H1 (cell line): ENCODE measurements at regions of chr6 and their contacts with region 1.

Region 1: GRCh38 chr6:158548418-158549161 is 11.3 kb upstream of the TMEM181 start:
- DNase-seq: no peak
- H3K4me3 ChIP-seq: no peak overlapping the region
- H3K27ac ChIP-seq: peak overlapping the region; percentile 47; the same call in 1 of the 2 replicates
- H3K4me1 ChIP-seq: peaks cover 0 to 7% (median 4%) of the 10 kb centered on the region in 4 experiments; a peak in 5 of 7 replicates
- H3K27me3 ChIP-seq: no peaks in the 10 kb centered on the region
- CTCF ChIP-seq: no peak
- EP300 ChIP-seq: no peak
- POLR2A ChIP-seq: no peak
- RAD21 ChIP-seq: no peak

Region 2: DNA sequence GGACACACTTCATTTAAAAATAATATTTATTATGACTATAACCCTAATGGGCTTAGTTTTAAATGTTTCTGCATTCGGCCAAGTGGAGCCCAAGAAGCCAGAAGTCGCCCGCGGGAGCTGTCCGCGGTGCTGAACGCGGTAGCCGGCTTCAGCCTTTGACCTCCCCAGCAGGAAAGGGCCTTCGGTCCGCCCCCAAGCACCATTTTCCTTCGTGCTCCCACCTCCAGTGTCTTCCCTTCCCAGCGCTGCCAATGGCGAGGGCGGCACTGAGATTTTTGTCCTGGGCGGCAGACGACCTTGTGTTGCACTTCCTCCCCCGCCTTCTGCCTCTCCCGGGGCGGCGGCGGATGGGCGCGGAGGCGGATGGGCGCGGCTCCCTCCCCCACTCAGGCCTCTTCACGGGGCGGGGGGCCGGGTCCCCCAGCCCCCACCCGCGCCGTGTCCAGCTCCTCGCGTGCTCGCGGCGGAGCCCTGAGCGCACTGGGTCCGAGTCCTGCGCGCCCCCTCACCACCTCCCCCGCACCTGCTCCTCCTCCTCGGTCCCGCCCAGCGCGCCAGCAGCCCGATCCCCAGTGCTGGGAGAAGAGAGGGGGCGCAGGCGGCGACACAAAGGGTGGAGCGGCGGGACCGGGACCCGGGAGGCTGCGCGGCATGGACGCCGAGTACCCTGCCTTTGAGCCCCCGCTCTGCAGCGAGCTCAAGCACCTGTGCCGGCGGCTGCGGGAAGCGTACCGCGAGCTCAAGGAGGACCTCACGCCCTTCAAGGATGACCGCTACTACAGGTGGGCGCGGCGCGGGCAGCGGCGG is 12.3 kb before region 1 on chr6:
- CTCF ChIA-PET with region 1: interaction called, 16 read pairs
- POLR2A ChIA-PET with region 1: interaction called, 11 read pairs
- DNase-seq: peak in 1 of 2 experiments; percentile 92
- H3K4me3 ChIP-seq: peak overlapping the region; percentile 77 to 96 (median 80)
- H3K27ac ChIP-seq: peak overlapping the region; percentile 20; the same call in 1 of the 2 replicates
- H3K4me1 ChIP-seq: peaks cover 2 to 3% (median 2%) of the 10 kb centered on the region in 4 experiments; a peak in 2 of 7 replicates
- H3K27me3 ChIP-seq: peaks cover 0 to 3% (median 1%) of the 10 kb centered on the region in 4 experiments; a peak in 3 of 7 replicates
- CTCF ChIP-seq: no peak
- EP300 ChIP-seq: no peak
- POLR2A ChIP-seq: no peak; a peak in 1 of 3 replicates
- RAD21 ChIP-seq: no peak; a peak in 1 of 4 replicates

Region 3: GRCh38 chr6:158559895-158560835 is 11.6 kb after region 1 on chr6 and contains the start of gene TMEM181:
- CTCF ChIA-PET with region 1: interaction called, 6 read pairs
- POLR2A ChIA-PET with region 1: interaction called, 11 read pairs
- DNase-seq: peak in 1 of 2 experiments; percentile 88
- H3K4me3 ChIP-seq: peak within 1 kb of the TSS; percentile 58 to 95 (median 66)
- H3K27ac ChIP-seq: peak within 1 kb of the TSS; percentile 70; the same call in 1 of the 2 replicates
- H3K4me1 ChIP-seq: peaks cover 5 to 9% (median 8%) of the 10 kb centered on the region in 4 experiments; a peak in 6 of 7 replicates
- H3K27me3 ChIP-seq: no peaks in the 10 kb centered on the region
- CTCF ChIP-seq: no peak
- EP300 ChIP-seq: no peak
- POLR2A ChIP-seq: peak; percentile 14 to 78
- RAD21 ChIP-seq: no peak
- total RNA-seq, gene TMEM181: 18.2 and 19.0 TPM in 2 replicates